Gastrocnemius medialis (tissue), 4 donors: ENCODE measurements at regions of chr3 and their contacts with region 1.

Region 1: GRCh38 chr3:54928046-54928770 is at the start of gene LRTM1:
- DNase-seq: no peak
- ATAC-seq: no peak
- H3K4me3 ChIP-seq: no peak within 1 kb of the TSS
- H3K27ac ChIP-seq: no peak within 1 kb of the TSS
- H3K4me1 ChIP-seq: peaks cover 5 to 16% of the 10 kb centered on the region in 2 donors
- H3K27me3 ChIP-seq: no peaks in the 10 kb centered on the region
- CTCF ChIP-seq: no peak
- POLR2A ChIP-seq: no peak
- total RNA-seq, gene LRTM1: not detected

Region 2: GRCh38 chr3:54891548-54892120 is 36.6 kb before region 1 on chr3:
- in situ Hi-C with region 1: no loop called
- intact Hi-C with region 1: loop called (anchors 1 kb)
- DNase-seq: peak; percentile 91 to 94
- ATAC-seq: peak; percentile 96 to 98
- H3K4me3 ChIP-seq: no peak overlapping the region
- H3K27ac ChIP-seq: peak overlapping the region; percentile 78 to 93 (median 84)
- H3K4me1 ChIP-seq: peaks cover 33 to 49% of the 10 kb centered on the region in 2 donors
- H3K27me3 ChIP-seq: no peaks in the 10 kb centered on the region
- CTCF ChIP-seq: peak; percentile 48 to 69 (median 60)
- POLR2A ChIP-seq: no peak